ENCODE measurements at regions of chr1 and their contacts with region 1.

Region 1: GRCh38 chr1:112298558-112298957 is 97.5 kb upstream of the CTTNBP2NL start:
- DNase-seq: peak; percentile 71
- H3K27ac ChIP-seq: no peak overlapping the region
- CTCF ChIP-seq: peak; percentile 54

Region 2: DNA sequence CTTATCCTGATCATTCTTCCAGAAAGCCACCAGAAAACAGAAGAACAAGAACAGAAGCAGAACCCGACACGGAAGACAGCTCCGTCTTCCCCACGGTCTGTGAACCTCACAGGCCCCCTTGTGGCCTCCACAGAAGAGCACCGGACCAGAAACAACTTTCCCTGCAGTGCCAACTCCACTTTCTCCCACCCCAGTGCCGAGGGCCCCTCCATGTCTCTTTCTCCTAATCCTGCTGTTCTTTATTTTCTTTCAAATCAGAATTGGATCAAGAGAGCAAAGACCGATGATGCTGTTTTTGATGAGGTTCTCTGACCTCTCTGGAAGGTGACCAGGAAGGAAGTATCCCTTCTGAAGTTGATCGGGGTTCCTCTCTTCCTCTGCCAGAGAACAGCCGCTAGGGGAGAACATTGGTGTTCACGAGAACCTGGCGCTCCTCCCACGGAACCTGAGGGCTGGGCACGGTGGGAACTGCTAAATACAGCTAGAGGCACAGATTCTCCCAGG is 38.5 kb after region 1 on chr1:
- CTCF ChIA-PET with region 1: interaction called, 17 read pairs
- POLR2A ChIA-PET with region 1: no interaction called
- DNase-seq: peak; percentile 41
- H3K27ac ChIP-seq: no peak overlapping the region
- CTCF ChIP-seq: peak; percentile 29

Region 3: GRCh38 chr1:112369392-112370285 is 71.1 kb after region 1 on chr1:
- CTCF ChIA-PET with region 1: interaction called, 17 read pairs
- POLR2A ChIA-PET with region 1: no interaction called
- DNase-seq: peak; percentile 84
- H3K27ac ChIP-seq: no peak overlapping the region
- CTCF ChIP-seq: peak; percentile 97

Region 4: DNA sequence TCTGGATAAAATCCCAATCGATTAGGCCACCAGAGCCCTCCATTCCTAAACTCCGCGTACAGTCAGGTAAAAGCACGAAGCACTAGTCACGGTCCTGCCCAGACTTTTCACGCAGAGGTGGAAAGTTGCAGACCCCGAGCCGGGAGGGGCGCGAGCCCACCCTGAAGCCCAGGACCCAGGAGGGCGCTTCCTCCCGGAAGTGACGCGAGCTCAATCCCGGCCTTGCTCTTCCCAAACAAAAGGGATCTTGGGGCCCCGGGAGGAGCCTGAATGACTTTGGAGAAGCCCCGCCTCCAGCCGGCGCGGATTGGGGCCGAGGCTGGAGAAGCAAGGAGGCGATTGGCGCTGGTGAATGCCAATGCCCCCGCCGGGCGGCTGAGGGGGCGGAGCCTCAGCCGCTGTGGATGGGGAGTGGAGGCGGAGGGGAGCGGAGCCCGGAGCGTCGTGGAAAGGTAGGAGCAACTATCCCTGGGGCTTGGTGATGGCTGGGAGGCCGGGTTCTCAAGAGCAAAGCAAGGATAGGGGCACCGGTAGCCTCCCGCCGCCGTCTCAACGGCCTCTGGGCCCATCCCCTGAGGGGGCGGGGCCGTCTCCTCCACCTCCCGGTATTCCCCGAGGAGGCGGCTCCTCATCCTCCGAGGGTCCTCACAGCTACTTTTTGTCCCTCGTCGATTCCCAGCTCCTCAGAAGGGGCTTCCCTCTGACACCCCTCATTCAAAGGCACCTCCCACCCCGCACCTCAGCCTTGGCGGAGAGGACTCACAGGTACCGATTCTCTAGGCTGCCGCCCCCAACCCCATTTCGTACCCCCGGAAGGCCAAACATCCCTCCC is 97.5 kb after region 1 on chr1 and contains the start of gene CTTNBP2NL:
- CTCF ChIA-PET with region 1: no interaction called
- POLR2A ChIA-PET with region 1: no interaction called
- DNase-seq: peak; percentile 98
- H3K27ac ChIP-seq: peak within 1 kb of the TSS; percentile 83
- CTCF ChIP-seq: no peak

Measured in RWPE1 (cell line).